Psoas muscle (tissue), 8 donors: ENCODE measurements at regions of chr18 and their contacts with region 1.

Region 1: DNA sequence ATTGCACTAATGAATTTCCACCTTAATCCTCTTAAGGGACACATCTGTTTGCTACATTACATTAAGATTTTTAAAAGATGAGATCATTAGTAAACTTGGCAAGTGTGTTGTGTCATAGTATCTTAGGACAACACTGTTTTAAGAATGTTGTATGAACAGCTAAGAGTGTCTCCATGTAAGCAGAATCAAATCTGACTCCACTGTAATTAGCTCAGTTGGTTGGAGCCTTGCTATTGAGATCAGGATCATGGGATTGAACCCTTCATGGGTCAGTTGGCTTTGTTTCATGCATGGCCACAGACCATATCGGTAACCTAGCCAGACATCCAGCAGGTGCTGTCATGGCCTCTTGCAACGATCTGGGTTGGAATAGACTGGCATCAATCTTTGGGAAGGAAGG is 5.2 kb downstream of the FHOD3 start:
- DNase-seq: no peak
- ATAC-seq: peak in 3 of 4 donors; percentile 36 to 50 (median 49)
- H3K4me3 ChIP-seq: no peak overlapping the region
- H3K27ac ChIP-seq: peak overlapping the region; percentile 62
- H3K4me1 ChIP-seq: peaks cover 37% of the 10 kb centered on the region
- H3K27me3 ChIP-seq: no peaks in the 10 kb centered on the region
- CTCF ChIP-seq: no peak

Region 2: DNA sequence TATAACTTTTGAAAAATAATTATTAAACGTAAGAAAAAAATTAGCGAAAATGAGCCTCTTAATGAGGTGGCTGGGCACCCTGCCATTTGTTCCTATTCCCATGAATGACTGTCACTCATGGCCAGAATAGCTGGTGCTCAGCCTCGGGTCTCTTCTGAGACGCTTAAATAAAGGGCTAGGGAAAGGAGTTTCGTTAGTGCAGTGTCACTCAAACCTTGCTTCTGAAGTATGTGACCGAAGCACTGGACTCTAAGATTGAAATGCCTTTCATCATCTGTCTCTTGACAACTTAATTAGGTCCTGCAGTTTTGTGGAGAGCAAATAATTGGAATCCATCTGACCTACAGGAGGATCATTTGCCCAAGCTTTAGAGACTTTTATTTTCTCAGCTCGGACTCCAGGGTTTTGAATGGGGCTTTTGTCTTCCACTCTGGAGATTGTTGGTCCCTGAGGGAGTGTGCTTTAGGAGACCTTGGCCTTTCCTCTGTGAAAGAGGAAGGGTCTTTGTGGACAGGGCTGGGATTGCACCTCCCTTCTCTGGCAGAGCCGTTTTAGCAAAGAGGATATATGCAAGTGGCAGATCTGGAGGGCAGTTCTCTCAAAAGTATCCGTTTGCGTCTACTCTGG is 47.5 kb before region 1 on chr18:
- intact Hi-C with region 1: no loop called
- DNase-seq: no peak
- ATAC-seq: no peak
- H3K4me3 ChIP-seq: no peak overlapping the region
- H3K27ac ChIP-seq: no peak overlapping the region
- H3K4me1 ChIP-seq: no peaks in the 10 kb centered on the region
- H3K27me3 ChIP-seq: no peaks in the 10 kb centered on the region
- CTCF ChIP-seq: no peak

Region 3: DNA sequence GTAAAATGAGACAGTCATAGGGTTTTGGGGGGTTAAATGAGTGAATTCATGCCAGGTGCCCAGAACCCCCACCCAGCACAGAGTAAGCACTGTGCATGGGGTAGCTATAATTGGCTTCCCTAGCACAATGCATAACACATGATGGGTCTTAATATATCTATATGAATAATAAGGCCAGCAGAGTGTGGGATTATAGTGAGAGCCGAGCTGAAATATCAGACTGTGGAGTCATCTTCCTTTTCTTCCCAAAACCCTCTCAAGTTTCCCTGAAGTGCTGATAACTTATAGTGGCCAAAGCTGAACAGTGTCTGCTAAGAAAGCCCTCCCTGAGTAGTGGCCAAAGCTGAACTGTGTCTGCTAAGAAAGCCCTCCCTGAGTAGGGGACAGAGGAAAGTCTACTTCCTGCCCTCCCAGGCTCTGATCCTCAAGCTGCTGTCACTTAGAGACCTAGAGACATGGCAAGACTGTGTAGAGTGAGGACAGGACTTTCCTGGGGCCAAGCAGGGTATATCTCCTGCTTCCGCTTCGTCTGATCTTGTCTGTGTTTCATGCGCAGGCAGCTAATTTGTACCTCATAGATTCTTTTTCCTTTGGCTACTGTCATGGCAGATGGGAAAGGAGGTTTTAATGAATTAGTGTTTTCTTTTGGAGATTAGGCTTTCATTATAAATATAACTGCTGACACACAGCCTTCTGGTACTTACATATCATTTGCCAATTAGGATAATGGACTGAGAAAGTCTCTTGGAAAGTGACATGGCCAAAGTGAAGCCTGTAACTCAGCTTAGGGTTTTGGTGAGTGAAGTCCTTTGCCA is 89.7 kb after region 1 on chr18:
- intact Hi-C with region 1: loop called in 1 of 2 experiments (anchors 5 kb)
- DNase-seq: no peak
- ATAC-seq: peak; percentile 81 to 86 (median 82)
- H3K4me3 ChIP-seq: peak overlapping the region; percentile 2
- H3K27ac ChIP-seq: peak overlapping the region; percentile 87
- H3K4me1 ChIP-seq: peaks cover 40% of the 10 kb centered on the region
- H3K27me3 ChIP-seq: no peaks in the 10 kb centered on the region
- CTCF ChIP-seq: no peak